Activated naive CD4-positive, alpha-beta T cell treated with anti-CD3 and anti-CD28 coated beads for 36 hours (primary cell): ENCODE measurements at regions of chr17 and their contacts with region 1.

Region 1: GRCh38 chr17:16027708-16028584 is 28.3 kb downstream of the TTC19 start:
- DNase-seq: peak; percentile 82
- H3K4me3 Mint-ChIP-seq: peak overlapping the region; percentile 52
- H3K27ac Mint-ChIP-seq: peak overlapping the region; percentile 97
- H3K4me1 Mint-ChIP-seq: peaks cover 40% of the 10 kb centered on the region
- H3K27me3 Mint-ChIP-seq: no peaks in the 10 kb centered on the region

Region 2: GRCh38 chr17:15981208-15981607 is 46.7 kb before region 1 on chr17:
- CTCF ChIA-PET with region 1: no interaction called
- intact Hi-C with region 1: loop called (anchors 1 kb)
- DNase-seq: peak; percentile 65
- H3K4me3 Mint-ChIP-seq: no peak overlapping the region
- H3K27ac Mint-ChIP-seq: no peak overlapping the region
- H3K4me1 Mint-ChIP-seq: peaks cover 21% of the 10 kb centered on the region
- H3K27me3 Mint-ChIP-seq: no peaks in the 10 kb centered on the region

Region 3: DNA sequence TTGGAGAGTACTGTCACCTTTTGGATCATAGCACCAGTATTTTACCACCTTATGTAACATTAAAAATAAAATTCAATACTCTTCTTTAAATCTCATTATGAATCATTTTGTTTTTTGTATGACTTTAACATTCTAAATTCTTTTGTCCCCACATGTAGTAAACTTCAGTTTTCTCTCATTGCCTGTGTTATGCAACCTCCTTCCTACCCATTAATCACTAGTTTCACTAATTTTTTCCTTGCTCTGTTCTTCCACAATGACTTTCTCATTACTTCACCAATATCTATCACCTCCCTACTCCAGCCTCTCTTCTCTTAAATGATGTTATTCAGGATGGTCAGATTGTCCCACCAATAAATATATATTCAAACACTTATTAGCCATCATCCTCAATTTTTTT is 40.4 kb after region 1 on chr17:
- CTCF ChIA-PET with region 1: no interaction called
- intact Hi-C with region 1: loop called (anchors 1 kb)
- DNase-seq: no peak
- H3K4me3 Mint-ChIP-seq: no peak overlapping the region
- H3K27ac Mint-ChIP-seq: no peak overlapping the region
- H3K4me1 Mint-ChIP-seq: peaks cover 17% of the 10 kb centered on the region
- H3K27me3 Mint-ChIP-seq: no peaks in the 10 kb centered on the region

Region 4: DNA sequence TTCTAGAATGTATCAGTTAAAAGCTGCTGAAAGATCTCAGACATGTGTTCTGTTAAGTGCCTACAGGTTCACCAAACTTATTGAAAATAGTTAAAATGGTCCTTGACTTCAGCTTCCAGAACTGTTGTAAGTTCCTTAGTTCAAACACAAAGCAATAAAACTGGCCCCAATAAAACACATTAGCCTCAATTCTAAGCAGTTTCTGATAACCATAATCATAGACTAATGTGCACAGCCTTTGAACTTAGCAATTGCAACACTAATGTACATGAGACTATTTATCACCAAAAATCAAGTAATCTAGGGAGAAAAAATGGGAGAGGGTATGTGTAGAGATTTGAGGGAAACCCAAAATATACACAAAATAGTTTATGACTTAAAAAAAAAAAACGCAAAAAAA is 204.4 kb after region 1 on chr17:
- CTCF ChIA-PET with region 1: no interaction called
- intact Hi-C with region 1: loop called (anchors 1 kb)
- DNase-seq: no peak
- H3K4me3 Mint-ChIP-seq: no peak overlapping the region
- H3K27ac Mint-ChIP-seq: no peak overlapping the region
- H3K4me1 Mint-ChIP-seq: peaks cover 24% of the 10 kb centered on the region
- H3K27me3 Mint-ChIP-seq: no peaks in the 10 kb centered on the region

Region 5: DNA sequence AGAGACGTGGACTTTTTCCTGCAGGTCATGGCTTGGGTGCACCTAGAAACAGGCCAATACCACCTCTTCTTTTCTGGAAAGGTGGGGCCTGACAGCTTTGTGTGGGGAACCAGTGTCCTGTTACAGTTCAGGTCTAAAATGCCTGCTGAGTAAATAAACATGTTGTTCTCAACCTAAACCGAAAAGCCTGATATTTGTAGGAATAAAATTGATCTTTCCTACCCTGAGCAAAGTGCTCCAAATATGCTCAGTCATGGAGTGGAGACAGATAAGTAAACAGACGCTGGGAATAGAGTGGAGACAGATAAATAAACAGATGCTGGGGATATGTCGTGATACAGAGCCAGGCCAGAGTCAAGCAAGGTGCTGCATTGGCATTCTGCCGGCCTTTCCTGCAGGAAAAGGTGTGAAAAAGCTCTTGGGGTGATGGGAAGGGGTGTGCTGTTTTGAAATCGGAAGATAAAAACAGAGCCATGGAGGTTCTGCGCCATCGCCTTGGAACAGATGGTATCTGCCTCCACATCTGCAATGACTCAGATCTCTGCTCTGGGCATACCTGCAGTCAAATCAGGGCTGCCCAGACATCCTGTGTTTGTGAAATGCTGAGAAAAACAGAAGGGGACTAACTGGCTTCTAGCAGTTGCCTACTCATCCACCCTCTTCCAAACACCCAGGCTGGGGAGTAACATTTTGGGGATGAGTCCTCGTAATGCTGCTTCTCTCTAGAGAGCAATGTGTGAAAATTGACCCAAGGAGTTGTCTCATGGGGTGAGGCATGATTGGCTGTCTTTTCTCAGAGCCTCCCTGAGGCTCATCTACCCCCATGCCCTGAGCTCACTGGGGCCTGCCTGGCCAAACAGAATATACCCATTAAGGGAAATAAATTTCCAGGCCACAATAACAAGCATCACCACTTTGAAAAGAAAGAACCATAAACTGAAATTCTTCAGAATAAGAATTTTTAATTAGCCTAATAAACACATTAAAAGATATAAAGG is 370.6 kb after region 1 on chr17:
- CTCF ChIA-PET with region 1: no interaction called
- intact Hi-C with region 1: loop called (anchors 5 kb)
- DNase-seq: peak; percentile 48
- H3K4me3 Mint-ChIP-seq: no peak overlapping the region
- H3K27ac Mint-ChIP-seq: no peak overlapping the region
- H3K4me1 Mint-ChIP-seq: peaks cover 7% of the 10 kb centered on the region
- H3K27me3 Mint-ChIP-seq: no peaks in the 10 kb centered on the region

Region 6: GRCh38 chr17:16415031-16415924 is 387.3 kb after region 1 on chr17 and contains the start of gene TRPV2:
- CTCF ChIA-PET with region 1: no interaction called
- intact Hi-C with region 1: loop called (anchors 5 kb)
- DNase-seq: peak; percentile 67
- H3K4me3 Mint-ChIP-seq: peak within 1 kb of the TSS; percentile 98
- H3K27ac Mint-ChIP-seq: peak within 1 kb of the TSS; percentile 100
- H3K4me1 Mint-ChIP-seq: peaks cover 43% of the 10 kb centered on the region
- H3K27me3 Mint-ChIP-seq: no peaks in the 10 kb centered on the region
- total RNA-seq, gene TRPV2: 23.7 to 24.8 TPM